G401 (cell line): ENCODE measurements at regions of chr17 and their contacts with region 1.

Region 1: GRCh38 chr17:42422958-42423712 is at the start of gene CAVIN1:
- DNase-seq: peak; percentile 96
- total RNA-seq, gene CAVIN1: 755 and 829 TPM in 2 replicates

Region 2: DNA sequence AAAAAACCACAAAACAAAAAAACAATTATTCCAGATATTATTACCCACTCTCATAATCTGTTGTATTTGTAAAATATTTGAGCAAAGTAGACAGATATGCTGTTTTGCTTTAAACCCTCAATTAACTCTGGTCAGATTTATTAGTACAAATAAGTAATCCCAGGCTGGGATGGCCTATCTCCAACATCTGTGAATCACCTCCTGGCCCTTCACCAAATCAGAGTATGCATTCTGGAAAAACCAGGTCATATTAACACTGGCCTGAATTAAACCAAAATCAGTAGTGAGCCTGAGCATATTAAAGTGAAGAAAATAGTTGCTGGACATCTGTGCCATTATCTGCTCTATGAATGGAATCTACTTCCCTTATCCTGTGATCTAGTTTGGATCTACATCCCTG is 75.9 kb before region 1 on chr17:
- in situ Hi-C with region 1: no loop called
- DNase-seq: peak; percentile 86

Region 3: GRCh38 chr17:42519546-42520491 is 96.7 kb after region 1 on chr17:
- in situ Hi-C with region 1: loop called (anchors 5 kb)
- DNase-seq: peak; percentile 79